SK-N-SH (cell line): ENCODE measurements at regions of chr19 and their contacts with region 1.

Region 1: GRCh38 chr19:35549174-35549788 is 3.9 kb downstream of the TMEM147 start:
- DNase-seq: peak; percentile 83
- H3K4me3 ChIP-seq: no peak overlapping the region
- H3K27ac ChIP-seq: no peak overlapping the region
- H3K4me1 ChIP-seq: peaks cover 5 to 16% of the 10 kb centered on the region in 2 experiments; a peak in 2 of 4 replicates
- H3K27me3 ChIP-seq: no peaks in the 10 kb centered on the region
- CTCF ChIP-seq: peak; percentile 81
- EP300 ChIP-seq: no peak
- RAD21 ChIP-seq: peak; percentile 68

Region 2: GRCh38 chr19:35497406-35497805 is 51.9 kb before region 1 on chr19:
- CTCF ChIA-PET with region 1: no interaction called
- POLR2A ChIA-PET with region 1: no interaction called
- DNase-seq: no peak
- H3K4me3 ChIP-seq: no peak overlapping the region
- H3K27ac ChIP-seq: no peak overlapping the region
- H3K4me1 ChIP-seq: peaks cover 0 to 2% of the 10 kb centered on the region in 2 experiments; a peak in 1 of 4 replicates
- H3K27me3 ChIP-seq: peaks cover 88% of the 10 kb centered on the region
- CTCF ChIP-seq: no peak
- EP300 ChIP-seq: no peak
- RAD21 ChIP-seq: no peak

Region 3: GRCh38 chr19:35592226-35592625 is 42.9 kb after region 1 on chr19:
- CTCF ChIA-PET with region 1: interaction called, 13 read pairs
- POLR2A ChIA-PET with region 1: no interaction called
- DNase-seq: peak; percentile 41
- H3K4me3 ChIP-seq: no peak overlapping the region
- H3K27ac ChIP-seq: no peak overlapping the region
- H3K4me1 ChIP-seq: no peaks in the 10 kb centered on the region
- H3K27me3 ChIP-seq: peaks cover 36% of the 10 kb centered on the region
- CTCF ChIP-seq: peak; percentile 48
- EP300 ChIP-seq: no peak
- RAD21 ChIP-seq: peak; percentile 59

Region 4: DNA sequence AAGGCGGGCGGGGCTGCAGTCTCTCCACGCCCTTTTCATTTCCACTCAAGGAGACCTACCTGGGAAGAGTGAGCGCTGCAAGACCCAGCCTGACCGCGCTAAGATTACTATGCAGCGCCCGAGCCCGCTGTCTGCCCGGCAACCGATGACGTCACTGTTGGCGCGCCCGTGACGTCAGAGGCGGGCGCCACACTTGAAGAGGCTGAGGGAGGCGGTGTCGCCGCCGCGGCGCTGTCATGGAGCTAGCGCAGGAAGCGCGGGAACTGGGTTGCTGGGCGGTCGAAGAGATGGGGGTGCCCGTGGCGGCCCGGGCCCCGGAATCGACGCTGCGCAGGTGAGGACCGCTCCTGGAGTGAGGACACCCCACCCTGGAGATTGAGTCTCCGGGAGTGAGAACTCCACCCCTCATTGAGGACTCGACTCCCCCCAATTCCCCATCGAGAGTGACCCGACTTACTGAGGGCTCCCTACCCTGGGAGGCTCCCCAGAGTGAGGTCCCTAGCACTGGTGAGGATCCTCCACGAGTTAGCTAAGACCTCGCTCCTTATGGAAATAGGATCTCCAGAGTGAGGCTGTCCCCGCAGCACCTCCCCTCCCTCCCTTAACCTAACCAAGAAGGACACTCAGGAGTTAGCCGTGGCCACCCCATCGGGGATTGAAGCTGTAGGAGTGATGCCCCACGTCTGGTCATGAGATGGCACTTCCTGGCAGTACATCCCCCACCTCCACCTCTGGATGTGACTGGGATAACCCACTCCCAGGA is 63.5 kb after region 1 on chr19 and contains the start of gene HAUS5:
- CTCF ChIA-PET with region 1: interaction called, 13 read pairs
- POLR2A ChIA-PET with region 1: no interaction called
- DNase-seq: peak; percentile 94
- H3K4me3 ChIP-seq: peak within 1 kb of the TSS; percentile 75 to 88
- H3K27ac ChIP-seq: peak within 1 kb of the TSS in 1 of 2 experiments; percentile 14; a peak in 1 of 4 replicates
- H3K4me1 ChIP-seq: peaks cover 0 to 10% of the 10 kb centered on the region in 2 experiments; a peak in 1 of 4 replicates
- H3K27me3 ChIP-seq: no peaks in the 10 kb centered on the region
- CTCF ChIP-seq: no peak
- EP300 ChIP-seq: no peak
- RAD21 ChIP-seq: no peak
- polyA plus RNA-seq, gene HAUS5: 5.1 and 7.1 TPM in 2 replicates

Region 5: GRCh38 chr19:35629332-35629633 is 80.0 kb after region 1 on chr19:
- CTCF ChIA-PET with region 1: no interaction called
- POLR2A ChIA-PET with region 1: no interaction called
- DNase-seq: no peak
- H3K4me3 ChIP-seq: peak overlapping the region; percentile 86 to 96
- H3K27ac ChIP-seq: peak overlapping the region; percentile 6 to 52; a peak in 2 of 4 replicates
- H3K4me1 ChIP-seq: peaks cover 0 to 12% of the 10 kb centered on the region in 2 experiments; a peak in 2 of 4 replicates
- H3K27me3 ChIP-seq: no peaks in the 10 kb centered on the region
- CTCF ChIP-seq: no peak
- EP300 ChIP-seq: no peak
- RAD21 ChIP-seq: no peak